Activated B cell treated with CpG ODN at 0.5 μM for 24 hours (primary cell): ENCODE measurements at regions of chr11 and their contacts with region 1.

Region 1: GRCh38 chr11:82867495-82868082 is 32.6 kb downstream of the PRCP start:
- DNase-seq: peak; percentile 37
- ATAC-seq: peak; percentile 61
- H3K4me3 Mint-ChIP-seq: peak overlapping the region; percentile 73
- H3K27ac Mint-ChIP-seq: peak overlapping the region; percentile 71
- H3K4me1 Mint-ChIP-seq: peaks cover 9% of the 10 kb centered on the region
- H3K27me3 Mint-ChIP-seq: no peaks in the 10 kb centered on the region
- CTCF ChIP-seq: peak; percentile 50

Region 2: GRCh38 chr11:82883853-82884252 is 16.3 kb after region 1 on chr11:
- CTCF ChIA-PET with region 1: interaction called, 12 read pairs
- POLR2A ChIA-PET with region 1: no interaction called
- intact Hi-C with region 1: no loop called
- DNase-seq: no peak
- ATAC-seq: no peak
- H3K4me3 Mint-ChIP-seq: no peak overlapping the region
- H3K27ac Mint-ChIP-seq: no peak overlapping the region
- H3K4me1 Mint-ChIP-seq: peaks cover 20% of the 10 kb centered on the region
- H3K27me3 Mint-ChIP-seq: no peaks in the 10 kb centered on the region
- CTCF ChIP-seq: no peak

Region 3: DNA sequence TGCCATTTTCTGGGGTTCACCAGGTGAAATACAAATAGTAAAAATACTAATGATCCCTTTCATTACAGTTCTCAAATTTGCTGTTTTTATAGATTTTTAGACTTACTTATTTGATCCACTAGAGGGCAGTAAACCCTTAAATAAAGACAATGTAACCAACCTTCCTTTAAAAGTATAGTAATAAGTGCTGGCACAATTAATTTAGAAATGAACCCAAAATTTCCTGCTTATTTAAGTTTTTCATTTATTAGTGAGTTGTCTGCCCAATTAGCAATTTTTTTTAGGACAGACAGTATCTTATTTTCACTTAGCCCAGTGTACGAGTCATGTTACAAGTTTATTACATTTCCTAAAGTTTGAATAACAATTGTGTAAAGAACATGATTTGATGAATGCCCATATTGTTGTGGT is 38.7 kb after region 1 on chr11:
- CTCF ChIA-PET with region 1: interaction called, 39 read pairs
- POLR2A ChIA-PET with region 1: interaction called, 7 read pairs
- intact Hi-C with region 1: loop called (anchors 1 kb)
- DNase-seq: no peak
- ATAC-seq: no peak
- H3K4me3 Mint-ChIP-seq: no peak overlapping the region
- H3K27ac Mint-ChIP-seq: peak overlapping the region; percentile 38
- H3K4me1 Mint-ChIP-seq: peaks cover 44% of the 10 kb centered on the region
- H3K27me3 Mint-ChIP-seq: no peaks in the 10 kb centered on the region
- CTCF ChIP-seq: peak; percentile 35

Region 4: GRCh38 chr11:83193315-83194280 is 326.0 kb after region 1 on chr11 and contains the start of gene ANKRD42:
- CTCF ChIA-PET with region 1: interaction called, 5 read pairs
- POLR2A ChIA-PET with region 1: no interaction called
- intact Hi-C with region 1: loop called (anchors 1 kb)
- DNase-seq: peak; percentile 75
- ATAC-seq: peak; percentile 63
- H3K4me3 Mint-ChIP-seq: peak within 1 kb of the TSS; percentile 100
- H3K27ac Mint-ChIP-seq: peak within 1 kb of the TSS; percentile 98
- H3K4me1 Mint-ChIP-seq: peaks cover 51% of the 10 kb centered on the region
- H3K27me3 Mint-ChIP-seq: no peaks in the 10 kb centered on the region
- CTCF ChIP-seq: no peak
- total RNA-seq, gene ANKRD42: 6.6 and 7.4 TPM in 2 replicates

Region 5: GRCh38 chr11:83724008-83724461 is 856.4 kb after region 1 on chr11:
- CTCF ChIA-PET with region 1: interaction called, 9 read pairs
- POLR2A ChIA-PET with region 1: no interaction called
- intact Hi-C with region 1: loop called (anchors 1 kb)
- DNase-seq: no peak
- ATAC-seq: peak; percentile 69
- H3K4me3 Mint-ChIP-seq: peak overlapping the region; percentile 62
- H3K27ac Mint-ChIP-seq: no peak overlapping the region
- H3K4me1 Mint-ChIP-seq: peaks cover 22% of the 10 kb centered on the region
- H3K27me3 Mint-ChIP-seq: peaks cover 3% of the 10 kb centered on the region
- CTCF ChIP-seq: no peak